GM13977 (cell line): ENCODE measurements at regions of chr7 and their contacts with region 1.

Region 1: DNA sequence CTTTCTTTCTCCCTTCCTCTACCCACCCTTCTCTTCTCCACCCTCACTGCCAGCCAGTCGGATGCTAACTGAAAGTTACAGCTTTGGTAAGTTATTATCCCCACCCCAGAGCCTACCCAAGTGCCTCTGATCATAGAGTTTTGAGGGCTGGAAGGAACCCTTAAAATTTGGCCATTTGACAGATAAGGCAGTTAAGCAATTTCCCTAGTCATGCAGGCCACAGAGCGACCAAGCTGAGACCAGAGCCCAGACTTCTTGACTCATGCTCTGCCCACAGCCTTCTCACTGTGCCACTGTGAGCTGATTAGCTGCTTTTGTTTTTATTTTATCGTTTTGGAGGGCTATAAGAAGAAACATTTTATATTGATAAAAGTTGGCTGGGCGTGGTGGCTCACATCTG is 17.2 kb downstream of the SAP25 start:
- DNase-seq: no peak
- CTCF ChIP-seq: no peak

Region 2: DNA sequence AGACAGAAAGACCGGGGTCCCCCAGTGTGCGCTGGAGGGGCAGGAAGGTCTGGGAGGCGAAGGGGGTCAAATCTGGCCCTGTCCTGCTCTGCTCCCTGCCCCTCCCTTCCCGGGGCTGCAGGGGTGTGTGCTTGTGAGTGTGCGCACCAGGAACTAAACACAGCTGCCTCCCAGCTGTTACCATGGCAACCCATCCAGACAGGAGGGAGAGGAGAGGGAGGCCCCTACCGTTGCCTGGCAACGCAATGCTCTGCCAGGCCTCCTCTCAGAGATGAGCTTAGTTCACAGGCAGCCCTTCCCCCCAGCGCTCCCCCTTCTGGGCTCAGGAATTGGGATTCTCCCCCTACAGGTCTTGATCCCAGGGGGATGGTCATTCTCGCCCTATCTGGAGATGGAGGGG is 66.7 kb before region 1 on chr7:
- in situ Hi-C with region 1: loop called (anchors 5 kb)
- DNase-seq: peak; percentile 92
- CTCF ChIP-seq: no peak